ENCODE measurements at regions of chr9 and their contacts with region 1.

Region 1: DNA sequence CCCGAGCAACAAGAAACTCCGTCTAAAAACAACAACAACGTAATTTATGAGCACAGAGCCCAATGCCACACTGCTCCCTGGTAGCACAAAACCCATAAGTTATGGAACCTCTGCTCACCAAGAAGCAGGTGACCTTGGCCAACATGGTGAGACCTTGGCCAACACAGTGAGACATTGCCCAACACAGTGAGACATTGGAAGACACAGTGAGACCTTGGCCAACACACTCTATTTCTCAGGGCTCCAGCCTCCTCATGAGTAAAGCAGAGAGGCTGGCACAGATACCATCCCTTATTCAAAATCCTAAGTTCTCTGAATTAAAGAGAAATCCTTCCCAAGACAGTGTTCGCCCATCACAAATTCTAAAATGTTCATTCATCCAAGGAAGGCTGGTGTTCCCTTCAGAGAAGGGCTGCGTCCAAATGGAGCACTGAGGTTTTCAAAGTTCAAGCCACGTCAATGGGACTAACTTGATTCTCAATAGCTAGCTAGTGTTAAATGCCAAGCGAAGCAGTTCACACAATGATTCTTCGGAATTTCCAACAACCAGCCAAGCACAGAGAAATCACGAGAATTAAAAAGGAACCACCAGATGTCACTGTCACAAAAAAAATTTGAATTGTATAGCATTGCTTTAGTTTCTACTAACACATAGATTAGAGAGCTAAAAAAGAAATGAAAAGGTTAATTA is 29.5 kb downstream of the TTC39B start:
- DNase-seq: no peak
- H3K4me3 Mint-ChIP-seq: no peak overlapping the region
- H3K27ac Mint-ChIP-seq: peak overlapping the region; percentile 60
- H3K4me1 Mint-ChIP-seq: peaks cover 28% of the 10 kb centered on the region
- H3K27me3 Mint-ChIP-seq: no peaks in the 10 kb centered on the region

Region 2: DNA sequence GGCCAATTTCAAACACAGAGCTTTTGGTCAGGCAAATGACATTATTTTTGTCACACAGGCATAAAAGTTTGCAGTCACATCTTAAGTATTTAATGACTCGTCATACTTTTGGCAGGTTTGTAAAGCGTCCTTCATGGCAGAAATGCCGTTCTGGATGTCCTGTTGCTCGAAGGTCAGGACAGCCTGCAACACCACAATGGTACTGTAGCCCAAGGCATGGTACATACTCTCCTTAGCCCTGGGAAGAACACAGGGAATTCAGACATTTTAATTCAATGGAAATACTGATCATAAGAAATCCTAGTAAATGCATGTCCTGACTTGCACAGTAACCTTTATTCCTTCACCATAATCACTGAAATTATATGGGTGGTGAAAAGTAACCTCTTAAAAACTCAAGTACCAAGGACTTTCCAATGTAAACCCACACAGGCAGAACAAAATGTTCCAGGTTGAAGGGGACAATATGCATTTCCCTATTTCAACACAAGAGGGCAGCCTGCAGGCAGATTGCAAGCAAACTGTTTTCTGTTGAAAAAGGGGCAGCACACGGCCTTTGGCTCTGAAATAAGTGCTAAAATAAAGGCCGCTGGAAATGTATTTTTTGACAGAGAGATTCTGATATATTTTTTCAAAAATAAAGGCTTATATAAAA is 66.3 kb before region 1 on chr9:
- intact Hi-C with region 1: loop called (anchors 1 kb)
- DNase-seq: peak; percentile 47
- H3K4me3 Mint-ChIP-seq: no peak overlapping the region
- H3K27ac Mint-ChIP-seq: no peak overlapping the region
- H3K4me1 Mint-ChIP-seq: peaks cover 39% of the 10 kb centered on the region
- H3K27me3 Mint-ChIP-seq: no peaks in the 10 kb centered on the region

Region 3: DNA sequence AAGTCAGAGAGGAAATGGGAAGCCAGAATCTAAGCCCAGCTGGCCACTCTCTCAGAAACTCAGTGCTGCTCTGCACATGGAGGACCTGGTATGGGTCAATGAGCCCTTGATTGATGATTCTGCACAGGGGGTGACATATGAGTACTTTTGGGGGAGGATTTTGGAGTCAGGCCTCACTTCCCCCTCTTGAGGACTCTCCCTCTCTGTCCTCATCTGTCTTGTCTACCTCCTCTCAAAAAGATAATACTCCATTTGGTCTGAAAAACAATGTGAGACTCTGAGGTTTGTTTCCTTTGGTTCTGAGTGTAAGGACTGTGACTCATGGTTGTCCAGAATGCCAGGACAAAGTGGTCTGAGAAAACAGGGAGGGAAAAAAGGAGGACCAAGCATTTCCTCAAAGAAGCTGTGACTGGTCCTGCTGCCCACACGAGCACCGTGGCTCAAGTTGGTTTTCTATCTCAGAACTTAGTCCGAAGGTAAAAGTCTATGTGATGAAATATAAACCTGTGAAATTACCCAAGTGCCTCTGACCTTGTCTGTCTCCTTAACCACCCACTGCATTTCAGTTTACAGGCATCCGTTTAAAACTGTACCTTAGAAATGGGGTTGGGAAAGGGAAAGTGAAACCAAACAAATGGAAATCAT is 18.3 kb after region 1 on chr9:
- intact Hi-C with region 1: loop called (anchors 1 kb)
- DNase-seq: no peak
- H3K4me3 Mint-ChIP-seq: peak overlapping the region; percentile 79
- H3K27ac Mint-ChIP-seq: peak overlapping the region; percentile 97
- H3K4me1 Mint-ChIP-seq: peaks cover 84% of the 10 kb centered on the region
- H3K27me3 Mint-ChIP-seq: no peaks in the 10 kb centered on the region

Region 4: DNA sequence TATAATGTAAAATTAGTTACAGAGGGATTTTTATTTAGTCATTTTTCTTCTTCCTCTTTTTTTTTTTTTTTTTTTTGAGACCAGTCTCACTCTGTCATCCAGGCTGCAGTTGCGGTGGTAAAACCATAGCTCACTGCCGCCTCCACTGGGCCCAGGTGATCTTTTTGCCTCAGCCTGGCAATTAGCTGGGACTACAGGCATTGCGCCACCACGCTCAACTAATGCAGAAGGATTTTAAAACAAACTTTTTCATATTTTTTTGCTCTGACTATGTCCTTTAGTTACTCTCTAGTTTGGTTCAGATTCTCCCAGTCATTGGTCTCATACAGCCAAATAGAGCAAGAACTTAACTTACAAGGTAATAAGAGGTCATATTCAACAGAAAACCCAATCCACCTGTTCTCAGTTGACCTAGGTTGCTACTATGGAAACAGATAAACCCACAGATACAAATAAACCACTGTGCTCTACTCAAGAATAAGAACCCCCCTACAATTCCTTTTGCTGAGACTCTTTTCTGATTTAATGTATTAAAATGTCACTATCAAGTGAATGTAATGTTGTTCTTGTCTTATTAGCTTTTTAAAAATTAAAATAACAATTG is 79.6 kb after region 1 on chr9:
- intact Hi-C with region 1: loop called (anchors 1 kb)
- DNase-seq: peak; percentile 11
- H3K4me3 Mint-ChIP-seq: no peak overlapping the region
- H3K27ac Mint-ChIP-seq: no peak overlapping the region
- H3K4me1 Mint-ChIP-seq: peaks cover 16% of the 10 kb centered on the region
- H3K27me3 Mint-ChIP-seq: peaks cover 2% of the 10 kb centered on the region

Region 5: DNA sequence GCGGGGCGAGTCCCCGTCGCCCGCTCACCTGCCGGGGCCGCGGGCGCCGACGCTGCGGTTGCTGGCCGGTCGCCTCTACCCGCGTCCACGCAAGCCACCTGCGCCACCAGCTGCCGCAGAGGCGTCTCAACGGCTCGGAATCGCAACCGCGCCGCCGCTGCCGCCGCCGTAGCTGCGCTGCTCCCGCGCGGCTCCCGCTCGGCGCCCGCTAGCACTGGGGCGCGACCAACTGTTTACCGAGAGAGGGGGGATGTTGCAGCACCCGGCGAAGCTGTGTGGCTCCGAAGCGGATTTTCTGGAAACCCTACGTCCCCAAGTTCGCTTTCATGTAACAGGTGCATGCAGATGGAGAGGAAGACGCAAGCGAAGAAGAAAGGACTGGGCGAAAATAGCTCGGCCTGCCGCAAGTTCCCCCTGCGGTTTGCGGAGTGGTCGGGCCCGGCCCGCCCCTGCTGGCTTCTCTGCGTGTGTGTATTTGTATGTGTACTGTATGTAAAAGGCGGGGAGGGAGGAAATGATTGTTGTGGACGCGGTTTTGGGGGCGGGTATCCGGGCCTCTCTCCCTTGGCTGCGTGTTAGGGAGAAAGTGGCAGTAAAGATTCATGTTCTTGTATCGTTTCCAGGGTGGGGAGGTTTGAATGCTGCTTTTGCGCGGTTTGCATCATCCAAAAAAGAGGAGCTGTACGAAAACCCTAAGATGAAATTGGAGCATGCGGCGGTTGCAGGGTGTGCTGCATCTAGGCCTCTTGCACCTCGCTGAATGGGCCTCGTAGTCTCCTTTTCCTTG is 233.4 kb after region 1 on chr9 and contains the start of gene PSIP1:
- intact Hi-C with region 1: loop called (anchors 5 kb)
- DNase-seq: peak; percentile 84
- H3K4me3 Mint-ChIP-seq: peak within 1 kb of the TSS; percentile 96
- H3K27ac Mint-ChIP-seq: peak within 1 kb of the TSS; percentile 100
- H3K4me1 Mint-ChIP-seq: peaks cover 52% of the 10 kb centered on the region
- H3K27me3 Mint-ChIP-seq: peaks cover 4% of the 10 kb centered on the region
- total RNA-seq, gene PSIP1: 90.6 and 95.3 TPM in 2 replicates

Region 6: GRCh38 chr9:15606643-15607472 is 329.3 kb after region 1 on chr9:
- intact Hi-C with region 1: loop called (anchors 2 kb)
- DNase-seq: no peak
- H3K4me3 Mint-ChIP-seq: no peak overlapping the region
- H3K27ac Mint-ChIP-seq: no peak overlapping the region
- H3K4me1 Mint-ChIP-seq: peaks cover 7% of the 10 kb centered on the region
- H3K27me3 Mint-ChIP-seq: no peaks in the 10 kb centered on the region

Measured in activated T-helper 1 cell treated with anti-CD3 and anti-CD28 coated beads, Interleukin-12 subunit alpha, Interleukin-12 subunit beta, Interleukin-2, Interleukin-4 antibody, amounts not matched to agents 30 ng/mL and 10 ng/mL and 1 ng/mL, durations not matched to agents 14 hours and 24 hours and 36 hours (primary cell).